Right cardiac atrium (tissue), 5 donors: ENCODE measurements at regions of chr20 and their contacts with region 1.

Region 1: GRCh38 chr20:1437235-1437904 is 29.3 kb downstream of the NSFL1C start:
- DNase-seq: peak; percentile 67 to 87 (median 82)
- ATAC-seq: peak; percentile 53 to 70
- H3K4me3 ChIP-seq: no peak overlapping the region
- H3K27ac ChIP-seq: no peak overlapping the region
- H3K4me1 ChIP-seq: no peaks in the 10 kb centered on the region
- H3K27me3 ChIP-seq: no peaks in the 10 kb centered on the region

Region 2: DNA sequence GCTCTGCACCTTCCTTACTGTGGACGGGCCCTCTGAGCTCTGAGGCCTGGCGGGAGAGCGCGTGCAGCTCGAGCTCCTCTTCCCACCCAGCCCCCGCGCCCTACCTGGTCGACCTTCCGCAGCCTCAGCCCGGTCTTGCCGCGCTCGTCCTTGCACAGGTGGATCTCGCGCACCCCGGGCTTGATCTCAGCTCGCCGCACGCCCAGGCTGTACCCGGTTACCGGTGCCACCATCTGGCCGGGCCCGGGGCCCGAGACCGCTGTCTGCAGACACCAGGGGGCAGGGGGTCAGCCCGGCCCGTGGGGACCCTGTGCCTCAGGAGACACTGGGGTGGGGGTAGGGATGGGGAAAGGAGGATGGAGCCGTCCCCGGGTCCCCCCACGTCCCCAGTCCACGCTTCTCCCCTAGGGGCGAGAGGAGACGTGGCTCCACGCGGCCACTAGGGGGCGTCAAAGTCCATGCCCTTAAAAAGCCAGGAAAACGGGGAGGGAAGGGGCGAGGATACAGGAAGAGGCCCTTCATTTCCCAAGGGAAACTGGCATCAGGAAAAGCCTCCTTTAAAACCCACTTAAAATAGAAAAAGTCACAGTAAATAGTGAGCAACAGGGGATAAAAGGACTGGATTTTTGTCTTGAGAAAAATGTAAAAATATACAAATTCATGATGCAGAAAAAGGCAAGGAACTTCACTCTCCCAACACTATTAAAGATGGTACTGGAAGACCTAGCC is 124.0 kb before region 1 on chr20:
- intact Hi-C with region 1: loop called (anchors 1 to 5 kb)
- DNase-seq: peak; percentile 80 to 90 (median 89)
- ATAC-seq: peak; percentile 83 to 89
- H3K4me3 ChIP-seq: no peak overlapping the region
- H3K27ac ChIP-seq: no peak overlapping the region
- H3K4me1 ChIP-seq: peaks cover 3% of the 10 kb centered on the region
- H3K27me3 ChIP-seq: no peaks in the 10 kb centered on the region